Activated naive CD4-positive, alpha-beta T cell treated with anti-CD3 and anti-CD28 coated beads for 36 hours (primary cell): ENCODE measurements at regions of chr22 and their contacts with region 1.

Region 1: DNA sequence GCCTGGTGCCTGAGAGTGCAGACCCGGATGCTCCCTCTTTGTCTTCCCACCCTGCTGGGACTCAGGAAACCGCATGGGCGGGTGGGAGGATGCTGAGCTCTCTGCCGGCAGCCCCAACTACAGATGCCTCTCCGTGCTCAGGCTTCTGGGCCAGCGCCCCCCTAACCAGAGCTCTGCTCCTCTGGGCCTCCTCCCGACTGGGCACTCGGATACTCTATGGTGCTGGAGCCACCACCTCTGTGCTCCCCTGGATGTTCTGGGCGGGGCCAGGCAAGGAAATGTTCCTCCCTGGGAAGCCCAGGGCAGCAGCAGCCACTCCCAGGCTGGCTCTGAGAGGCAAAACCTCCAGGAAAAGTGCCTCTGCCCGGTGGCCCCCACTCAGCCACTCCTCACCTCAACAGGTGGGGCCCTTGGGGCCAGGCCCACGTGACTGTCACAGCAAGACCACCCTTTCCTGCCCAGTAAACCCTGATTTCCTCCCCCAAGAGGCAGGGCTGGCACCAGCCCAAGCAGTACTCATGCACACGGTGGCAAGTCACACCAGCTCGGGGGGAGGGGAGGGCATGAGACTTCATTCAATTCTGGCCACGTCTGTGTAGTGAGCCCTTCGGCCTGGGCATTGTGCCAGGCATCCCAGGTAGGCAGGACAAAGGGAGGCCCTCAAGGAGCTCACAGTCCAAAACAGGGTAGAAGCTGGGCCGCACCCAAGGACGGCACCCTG is 54.7 kb upstream of the TCF20 start:
- DNase-seq: no peak
- H3K4me3 Mint-ChIP-seq: no peak overlapping the region
- H3K27ac Mint-ChIP-seq: no peak overlapping the region
- H3K4me1 Mint-ChIP-seq: peaks cover 44% of the 10 kb centered on the region
- H3K27me3 Mint-ChIP-seq: no peaks in the 10 kb centered on the region

Region 2: GRCh38 chr22:42313804-42314581 is 11.2 kb before region 1 on chr22:
- CTCF ChIA-PET with region 1: interaction called, 11 read pairs
- intact Hi-C with region 1: no loop called
- DNase-seq: peak; percentile 73
- H3K4me3 Mint-ChIP-seq: no peak overlapping the region
- H3K27ac Mint-ChIP-seq: no peak overlapping the region
- H3K4me1 Mint-ChIP-seq: peaks cover 46% of the 10 kb centered on the region
- H3K27me3 Mint-ChIP-seq: no peaks in the 10 kb centered on the region

Region 3: DNA sequence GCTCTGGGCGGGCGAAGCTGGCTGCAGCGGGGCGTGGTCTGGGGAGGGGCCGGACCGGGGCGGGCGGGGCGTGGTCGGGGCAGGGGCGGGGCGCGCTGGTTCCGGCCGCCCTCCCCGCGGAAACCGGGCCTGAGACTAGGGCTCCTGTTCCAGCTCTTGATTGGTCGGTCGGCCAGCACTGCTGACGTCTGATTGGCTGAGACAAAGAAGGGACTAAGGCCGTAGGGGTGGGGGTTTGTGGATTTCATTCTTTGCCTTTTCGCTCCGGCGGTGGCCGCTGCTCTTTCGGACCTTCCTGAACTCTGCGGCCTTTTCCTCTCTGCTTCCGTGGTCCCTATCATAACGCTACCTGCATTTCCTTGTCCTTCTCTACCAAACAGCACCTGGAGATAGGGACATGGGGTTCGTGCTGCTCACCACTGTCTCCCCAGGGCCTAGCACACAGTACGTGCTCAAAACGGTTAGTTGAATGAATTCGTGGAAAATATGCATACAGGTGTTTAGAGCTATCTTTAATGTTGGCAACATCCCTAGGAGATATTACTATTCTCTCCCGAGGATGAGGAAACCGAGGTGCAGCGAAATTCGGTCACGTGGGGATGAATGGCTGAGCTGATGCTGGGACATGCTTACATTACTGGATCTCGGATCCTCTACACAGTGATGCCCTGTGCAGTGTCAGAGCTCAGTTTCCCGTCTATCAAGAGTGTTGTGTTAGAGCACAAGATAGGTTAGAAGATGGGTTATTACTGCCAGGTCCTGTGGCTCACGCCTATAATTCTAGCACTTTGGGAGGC is 44.3 kb after region 1 on chr22:
- CTCF ChIA-PET with region 1: no interaction called
- intact Hi-C with region 1: loop called (anchors 2 kb)
- DNase-seq: peak; percentile 88
- H3K4me3 Mint-ChIP-seq: peak overlapping the region; percentile 85
- H3K27ac Mint-ChIP-seq: no peak overlapping the region
- H3K4me1 Mint-ChIP-seq: peaks cover 12% of the 10 kb centered on the region
- H3K27me3 Mint-ChIP-seq: peaks cover 23% of the 10 kb centered on the region